ENCODE measurements at regions of chr14 and their contacts with region 1.

Region 1: GRCh38 chr14:82328442-82328841 is 794.8 kb upstream of the SEL1L start:
- DNase-seq: no peak
- H3K4me3 ChIP-seq: no peak overlapping the region
- H3K27ac ChIP-seq: no peak overlapping the region
- H3K4me1 ChIP-seq: no peaks in the 10 kb centered on the region
- H3K27me3 ChIP-seq: no peaks in the 10 kb centered on the region
- CTCF ChIP-seq: no peak

Region 2: GRCh38 chr14:81353682-81354323 is 974.6 kb before region 1 on chr14:
- CTCF ChIA-PET with region 1: no interaction called
- dilution Hi-C with region 1: no loop called
- in situ Hi-C with region 1: no loop called
- intact Hi-C with region 1: no loop called
- DNase-seq: no peak
- H3K4me3 ChIP-seq: no peak overlapping the region
- H3K27ac ChIP-seq: no peak overlapping the region
- H3K4me1 ChIP-seq: no peaks in the 10 kb centered on the region
- H3K27me3 ChIP-seq: no peaks in the 10 kb centered on the region
- CTCF ChIP-seq: no peak

Region 3: GRCh38 chr14:82270286-82270685 is 58.2 kb before region 1 on chr14:
- CTCF ChIA-PET with region 1: no interaction called
- dilution Hi-C with region 1: no loop called
- in situ Hi-C with region 1: no loop called
- intact Hi-C with region 1: no loop called
- DNase-seq: no peak
- H3K4me3 ChIP-seq: no peak overlapping the region
- H3K27ac ChIP-seq: no peak overlapping the region
- H3K4me1 ChIP-seq: no peaks in the 10 kb centered on the region
- H3K27me3 ChIP-seq: no peaks in the 10 kb centered on the region
- CTCF ChIP-seq: no peak

Region 4: DNA sequence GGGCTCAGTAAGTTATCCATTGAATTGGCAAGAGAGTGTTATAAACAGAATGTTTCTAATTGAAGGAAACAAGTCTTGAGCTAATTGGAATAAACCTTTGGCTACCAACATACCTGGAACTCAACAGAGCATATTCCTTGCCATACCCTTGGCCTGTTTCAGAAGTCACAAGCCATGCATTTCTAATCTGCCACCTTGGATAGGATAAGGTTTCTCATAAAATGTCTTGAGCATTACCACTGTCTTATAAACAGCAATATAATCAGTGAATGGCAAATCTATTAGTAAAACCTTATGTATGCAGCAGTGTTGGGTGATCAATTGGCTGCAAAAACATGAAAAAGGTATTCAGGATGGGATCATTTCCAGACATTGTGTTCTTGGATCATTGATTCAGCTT is 29.6 kb before region 1 on chr14:
- CTCF ChIA-PET with region 1: no interaction called
- dilution Hi-C with region 1: no loop called
- in situ Hi-C with region 1: no loop called
- intact Hi-C with region 1: no loop called
- DNase-seq: no peak
- H3K4me3 ChIP-seq: no peak overlapping the region
- H3K27ac ChIP-seq: no peak overlapping the region
- H3K4me1 ChIP-seq: no peaks in the 10 kb centered on the region
- H3K27me3 ChIP-seq: no peaks in the 10 kb centered on the region
- CTCF ChIP-seq: no peak

Region 5: GRCh38 chr14:82362452-82362851 is 34.0 kb after region 1 on chr14:
- CTCF ChIA-PET with region 1: no interaction called
- dilution Hi-C with region 1: loop called (anchors 5 kb)
- in situ Hi-C with region 1: no loop called
- intact Hi-C with region 1: no loop called
- DNase-seq: no peak
- H3K4me3 ChIP-seq: no peak overlapping the region
- H3K27ac ChIP-seq: no peak overlapping the region
- H3K4me1 ChIP-seq: no peaks in the 10 kb centered on the region
- H3K27me3 ChIP-seq: no peaks in the 10 kb centered on the region
- CTCF ChIP-seq: no peak

Region 6: DNA sequence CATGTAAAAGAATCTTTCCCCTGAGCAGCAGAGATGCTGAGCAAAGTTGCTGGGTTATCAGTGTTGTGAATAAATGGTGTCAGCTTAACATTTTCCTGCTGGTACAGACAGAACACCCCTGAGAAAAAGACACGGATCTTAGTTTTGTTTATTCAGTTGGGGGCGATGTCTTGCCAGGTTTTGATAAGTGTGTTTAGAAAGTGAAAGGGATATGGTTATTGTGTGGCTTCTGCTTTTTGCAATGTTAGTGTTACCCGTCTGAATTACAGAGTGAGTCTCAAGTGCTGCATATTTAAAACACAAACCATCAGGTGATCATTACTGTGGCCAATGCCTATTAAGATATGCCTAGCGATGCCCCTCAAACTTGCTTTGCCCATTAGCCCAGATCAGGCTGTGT is 69.8 kb after region 1 on chr14:
- CTCF ChIA-PET with region 1: no interaction called
- dilution Hi-C with region 1: no loop called
- in situ Hi-C with region 1: no loop called
- intact Hi-C with region 1: no loop called
- DNase-seq: no peak
- H3K4me3 ChIP-seq: no peak overlapping the region
- H3K27ac ChIP-seq: no peak overlapping the region
- H3K4me1 ChIP-seq: no peaks in the 10 kb centered on the region
- H3K27me3 ChIP-seq: no peaks in the 10 kb centered on the region
- CTCF ChIP-seq: no peak